ENCODE measurements at regions of chr2 and their contacts with region 1.

Region 1: DNA sequence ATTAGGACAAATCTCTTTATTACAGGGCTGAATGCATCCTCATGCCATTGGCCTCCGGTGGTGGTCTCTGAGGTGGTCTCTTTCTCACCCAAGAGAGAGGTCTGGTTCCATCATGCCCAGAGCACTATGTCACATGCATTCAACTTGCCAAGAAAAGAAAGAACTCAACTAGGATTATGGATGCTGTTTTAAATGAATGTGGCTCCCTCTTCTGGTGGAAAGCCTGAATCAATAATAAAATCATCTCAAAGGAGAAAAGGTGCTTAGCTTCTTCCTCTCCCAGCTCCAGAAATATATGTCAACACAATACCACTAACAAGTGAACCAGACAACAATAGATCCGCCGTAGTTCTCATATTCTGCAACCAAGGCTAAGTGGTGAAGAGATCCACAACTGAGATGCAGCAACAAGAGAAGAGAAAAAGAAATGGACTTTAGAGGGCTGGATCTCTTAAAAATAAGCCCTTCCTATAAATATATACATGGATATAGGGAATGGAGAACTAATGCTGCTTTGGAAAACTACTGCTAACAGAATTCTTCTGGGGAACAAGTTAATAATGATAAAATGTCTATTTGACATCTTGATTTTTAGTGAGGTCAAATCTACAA is 396.8 kb downstream of the NCKAP5 start:
- DNase-seq: peak; percentile 9 to 66
- ATAC-seq: peak; percentile 73 to 83
- H3K4me3 ChIP-seq: no peak overlapping the region
- H3K27ac ChIP-seq: no peak overlapping the region
- H3K4me1 ChIP-seq: peaks cover 17% of the 10 kb centered on the region
- CTCF ChIP-seq: peak; percentile 83
- EP300 ChIP-seq: no peak
- POLR2A ChIP-seq: no peak
- RAD21 ChIP-seq: peak; percentile 83 to 88

Region 2: GRCh38 chr2:132547074-132547687 is 624.3 kb before region 1 on chr2:
- CTCF ChIA-PET with region 1: interaction called, 14 read pairs
- POLR2A ChIA-PET with region 1: no interaction called
- DNase-seq: peak; percentile 31 to 74
- ATAC-seq: peak; percentile 73 to 84; a peak in 4 of 6 replicates
- H3K4me3 ChIP-seq: no peak overlapping the region
- H3K27ac ChIP-seq: no peak overlapping the region
- H3K4me1 ChIP-seq: no peaks in the 10 kb centered on the region
- CTCF ChIP-seq: peak; percentile 74
- EP300 ChIP-seq: no peak
- POLR2A ChIP-seq: no peak
- RAD21 ChIP-seq: peak; percentile 78 to 81

Region 3: GRCh38 chr2:132782176-132782783 is 389.2 kb before region 1 on chr2:
- CTCF ChIA-PET with region 1: no interaction called
- POLR2A ChIA-PET with region 1: no interaction called
- DNase-seq: no peak
- ATAC-seq: no peak
- H3K4me3 ChIP-seq: no peak overlapping the region
- H3K27ac ChIP-seq: no peak overlapping the region
- H3K4me1 ChIP-seq: no peaks in the 10 kb centered on the region
- CTCF ChIP-seq: no peak
- EP300 ChIP-seq: no peak
- POLR2A ChIP-seq: no peak
- RAD21 ChIP-seq: no peak

Region 4: GRCh38 chr2:133109772-133110171 is 61.7 kb before region 1 on chr2:
- CTCF ChIA-PET with region 1: no interaction called
- POLR2A ChIA-PET with region 1: no interaction called
- DNase-seq: peak in 1 of 2 experiments; percentile 6
- ATAC-seq: 0 out of 6 replicates have a peak, but pooled peaks have one; percentile 40 to 59
- H3K4me3 ChIP-seq: no peak overlapping the region
- H3K27ac ChIP-seq: no peak overlapping the region
- H3K4me1 ChIP-seq: peaks cover 9% of the 10 kb centered on the region; the same call in 1 of the 3 replicates
- CTCF ChIP-seq: no peak
- EP300 ChIP-seq: no peak
- POLR2A ChIP-seq: no peak
- RAD21 ChIP-seq: no peak

Region 5: GRCh38 chr2:133221398-133221797 is 49.9 kb after region 1 on chr2:
- CTCF ChIA-PET with region 1: no interaction called
- POLR2A ChIA-PET with region 1: no interaction called
- DNase-seq: no peak
- ATAC-seq: no peak
- H3K4me3 ChIP-seq: no peak overlapping the region
- H3K27ac ChIP-seq: no peak overlapping the region
- H3K4me1 ChIP-seq: no peaks in the 10 kb centered on the region
- CTCF ChIP-seq: no peak
- EP300 ChIP-seq: no peak
- POLR2A ChIP-seq: no peak
- RAD21 ChIP-seq: no peak

Region 6: DNA sequence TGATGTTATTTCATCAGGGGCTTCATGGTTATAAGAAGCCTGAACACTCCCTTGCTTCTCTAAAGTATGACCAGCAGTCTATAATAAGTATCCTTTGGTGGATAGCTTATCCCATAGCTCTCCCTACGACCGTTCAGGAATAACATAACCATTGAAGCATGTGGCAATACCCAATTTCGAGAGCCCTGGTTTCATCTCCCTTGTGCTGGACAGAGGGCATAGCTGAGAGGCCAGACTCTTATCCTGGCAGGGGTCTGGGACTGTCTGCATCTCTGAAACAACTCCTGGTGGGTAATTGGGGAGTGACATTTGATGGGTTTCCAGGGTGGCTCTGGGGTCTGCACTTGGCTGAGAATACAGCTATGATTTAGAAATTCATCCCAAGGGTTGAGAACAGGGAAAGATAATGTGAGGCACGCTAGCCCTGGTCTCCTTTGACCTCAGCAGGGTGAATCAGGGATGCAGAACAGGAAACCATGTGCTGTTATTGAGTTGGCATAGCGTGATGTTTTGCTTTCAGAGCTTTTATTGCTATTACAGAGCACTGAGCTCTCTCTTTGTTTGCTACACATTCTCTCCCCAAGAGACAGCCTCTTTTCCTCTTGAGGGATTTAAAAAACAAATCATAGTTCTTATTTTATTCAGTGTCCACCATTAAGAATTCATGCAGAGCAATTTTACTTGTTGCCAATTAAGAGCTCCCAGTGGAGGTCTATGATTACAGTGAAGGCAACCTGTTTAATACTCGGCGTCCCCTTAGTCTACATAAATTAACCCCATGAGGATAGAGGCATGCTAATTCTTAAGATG is 122.2 kb after region 1 on chr2:
- CTCF ChIA-PET with region 1: no interaction called
- POLR2A ChIA-PET with region 1: no interaction called
- DNase-seq: no peak
- ATAC-seq: no peak
- H3K4me3 ChIP-seq: no peak overlapping the region
- H3K27ac ChIP-seq: no peak overlapping the region
- H3K4me1 ChIP-seq: no peaks in the 10 kb centered on the region
- CTCF ChIP-seq: no peak
- EP300 ChIP-seq: no peak
- POLR2A ChIP-seq: no peak
- RAD21 ChIP-seq: no peak

Measured in A549 (cell line).